ENCODE measurements at regions of chr1 and their contacts with region 1.

Region 1: GRCh38 chr1:15803354-15803753 is 4.1 kb downstream of the UQCRHL start:
- DNase-seq: peak in 1 of 2 donors; percentile 70
- ATAC-seq: no peak
- H3K4me3 ChIP-seq: no peak overlapping the region
- H3K27ac ChIP-seq: no peak overlapping the region
- H3K4me1 ChIP-seq: peaks cover 0 to 5% of the 10 kb centered on the region in 2 donors
- H3K27me3 ChIP-seq: no peaks in the 10 kb centered on the region

Region 2: DNA sequence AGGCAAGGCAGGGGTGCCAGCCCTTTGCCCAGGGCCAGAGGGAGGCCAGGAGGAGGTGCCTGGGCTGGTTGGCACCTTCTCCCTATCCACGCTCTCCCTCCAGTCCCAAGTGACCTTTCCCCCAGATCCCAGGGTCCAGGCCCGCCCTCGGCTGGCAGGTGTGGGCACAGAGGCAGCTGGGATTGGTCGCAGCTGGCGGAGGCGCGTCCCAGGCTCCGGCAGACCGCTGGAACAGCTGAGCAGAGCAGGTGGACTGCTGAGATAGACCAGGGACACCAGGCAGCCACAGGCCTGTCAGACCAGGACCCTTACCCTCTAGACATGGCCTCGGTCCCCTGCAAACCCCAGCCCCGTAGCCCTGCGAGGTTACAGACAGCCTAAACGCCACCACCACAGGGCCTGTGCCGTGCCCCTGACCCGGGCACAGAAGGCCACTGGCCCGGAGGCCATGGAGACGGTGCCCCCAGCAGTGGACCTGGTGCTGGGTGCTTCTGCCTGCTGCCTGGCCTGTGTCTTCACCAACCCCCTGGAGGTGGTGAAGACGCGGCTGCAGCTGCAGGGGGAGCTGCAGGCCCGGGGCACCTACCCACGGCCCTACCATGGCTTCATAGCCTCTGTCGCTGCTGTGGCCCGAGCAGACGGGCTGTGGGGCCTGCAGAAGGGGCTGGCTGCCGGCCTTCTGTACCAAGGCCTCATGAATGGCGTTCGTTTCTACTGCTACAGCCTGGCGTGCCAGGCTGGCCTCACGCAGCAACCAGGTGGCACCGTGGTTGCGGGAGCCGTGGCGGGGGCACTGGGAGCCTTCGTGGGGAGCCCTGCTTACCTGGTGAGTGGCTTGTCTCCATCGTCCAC is 67.1 kb before region 1 on chr1 and contains the start of gene SLC25A34:
- intact Hi-C with region 1: no loop called
- DNase-seq: peak in 1 of 2 donors; percentile 61
- ATAC-seq: peak; percentile 14
- H3K4me3 ChIP-seq: no peak within 1 kb of the TSS
- H3K27ac ChIP-seq: peak within 1 kb of the TSS in 1 of 2 donors; percentile 3
- H3K4me1 ChIP-seq: no peaks in the 10 kb centered on the region
- H3K27me3 ChIP-seq: no peaks in the 10 kb centered on the region
- total RNA-seq, gene SLC25A34: 2.5 to 4.3 TPM

Region 3: DNA sequence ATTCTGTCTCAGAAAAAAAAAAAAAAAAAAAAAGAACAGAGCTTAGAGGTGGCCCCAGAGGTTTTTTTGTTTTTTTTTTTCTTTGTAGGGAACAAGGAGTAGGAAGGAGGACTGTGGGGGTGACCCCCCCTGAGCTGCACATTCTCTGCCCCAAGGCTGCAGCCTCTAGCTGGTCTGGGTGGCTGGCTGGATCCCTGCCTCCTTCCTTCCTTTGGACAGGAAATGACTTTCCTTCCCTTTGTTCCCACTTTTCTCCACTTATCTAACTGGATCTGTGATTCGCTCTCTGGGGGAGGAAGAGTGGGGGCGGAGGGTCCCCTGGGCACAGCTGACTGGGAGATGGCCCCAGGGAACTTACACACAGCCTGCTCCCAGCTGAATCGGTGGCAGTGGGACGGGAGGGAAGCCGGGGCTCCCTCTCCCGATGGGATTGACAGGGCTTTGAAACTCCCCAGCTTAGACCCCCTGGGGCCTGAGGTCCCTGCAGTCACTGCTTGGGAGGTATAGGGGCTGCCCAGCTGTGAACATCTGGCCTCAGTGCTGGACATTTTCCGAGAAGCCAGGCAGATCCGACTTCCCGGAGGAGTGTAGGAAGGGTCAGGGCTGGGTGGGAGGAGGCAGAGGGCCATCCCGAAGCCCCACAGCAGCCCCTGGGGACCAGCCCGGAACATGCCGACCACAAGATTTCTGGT is 42.7 kb before region 1 on chr1:
- intact Hi-C with region 1: no loop called
- DNase-seq: peak in 1 of 2 donors; percentile 79
- ATAC-seq: peak; percentile 23
- H3K4me3 ChIP-seq: peak overlapping the region; percentile 46 to 99
- H3K27ac ChIP-seq: peak overlapping the region; percentile 77 to 79
- H3K4me1 ChIP-seq: no peaks in the 10 kb centered on the region
- H3K27me3 ChIP-seq: no peaks in the 10 kb centered on the region

Region 4: GRCh38 chr1:15825800-15826199 is 22.4 kb after region 1 on chr1:
- intact Hi-C with region 1: no loop called
- DNase-seq: peak in 1 of 2 donors; percentile 29
- ATAC-seq: no peak
- H3K4me3 ChIP-seq: no peak overlapping the region
- H3K27ac ChIP-seq: no peak overlapping the region
- H3K4me1 ChIP-seq: peaks cover 0 to 3% of the 10 kb centered on the region in 2 donors
- H3K27me3 ChIP-seq: no peaks in the 10 kb centered on the region

Region 5: GRCh38 chr1:15835741-15836510 is 32.6 kb after region 1 on chr1:
- intact Hi-C with region 1: loop called in 1 of 2 experiments (anchors 2 kb)
- DNase-seq: peak; percentile 100
- ATAC-seq: peak; percentile 95
- H3K4me3 ChIP-seq: peak overlapping the region; percentile 76 to 85
- H3K27ac ChIP-seq: peak overlapping the region; percentile 93 to 98
- H3K4me1 ChIP-seq: no peaks in the 10 kb centered on the region
- H3K27me3 ChIP-seq: no peaks in the 10 kb centered on the region

Region 6: GRCh38 chr1:15876357-15877055 is 73.2 kb after region 1 on chr1:
- intact Hi-C with region 1: no loop called
- DNase-seq: no peak
- ATAC-seq: no peak
- H3K4me3 ChIP-seq: no peak overlapping the region
- H3K27ac ChIP-seq: no peak overlapping the region
- H3K4me1 ChIP-seq: peaks cover 3 to 8% of the 10 kb centered on the region in 2 donors
- H3K27me3 ChIP-seq: no peaks in the 10 kb centered on the region

Region 7: DNA sequence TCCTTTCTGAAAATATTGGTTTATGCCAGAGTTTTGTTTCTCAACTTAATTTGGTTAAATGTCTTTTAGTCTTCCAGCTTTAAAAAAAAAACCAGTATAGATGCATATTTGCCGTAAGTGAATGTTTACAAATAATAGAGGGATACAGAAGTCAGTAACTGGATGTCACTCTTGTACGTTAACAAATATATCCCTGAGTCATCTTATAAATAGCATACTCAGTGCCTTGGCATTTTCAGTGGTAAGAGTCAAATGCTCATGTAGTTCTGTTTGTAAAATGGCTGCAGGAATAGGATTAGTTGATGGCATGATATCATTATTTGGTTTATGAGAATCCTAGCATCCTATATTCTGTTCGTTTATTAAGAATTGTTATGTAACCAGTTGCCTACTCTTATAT is 99.5 kb after region 1 on chr1:
- intact Hi-C with region 1: loop called in 1 of 2 experiments (anchors 10 kb)
- DNase-seq: no peak
- ATAC-seq: no peak
- H3K4me3 ChIP-seq: no peak overlapping the region
- H3K27ac ChIP-seq: no peak overlapping the region
- H3K4me1 ChIP-seq: peaks cover 0 to 1% of the 10 kb centered on the region in 2 donors
- H3K27me3 ChIP-seq: no peaks in the 10 kb centered on the region

Region 8: GRCh38 chr1:15949453-15950245 is 146.3 kb after region 1 on chr1:
- intact Hi-C with region 1: loop called (anchors 5 kb)
- DNase-seq: peak; percentile 96 to 97
- ATAC-seq: peak; percentile 88
- H3K4me3 ChIP-seq: no peak overlapping the region
- H3K27ac ChIP-seq: peak overlapping the region; percentile 96 to 99
- H3K4me1 ChIP-seq: peaks cover 0 to 6% of the 10 kb centered on the region in 2 donors
- H3K27me3 ChIP-seq: no peaks in the 10 kb centered on the region

Region 9: DNA sequence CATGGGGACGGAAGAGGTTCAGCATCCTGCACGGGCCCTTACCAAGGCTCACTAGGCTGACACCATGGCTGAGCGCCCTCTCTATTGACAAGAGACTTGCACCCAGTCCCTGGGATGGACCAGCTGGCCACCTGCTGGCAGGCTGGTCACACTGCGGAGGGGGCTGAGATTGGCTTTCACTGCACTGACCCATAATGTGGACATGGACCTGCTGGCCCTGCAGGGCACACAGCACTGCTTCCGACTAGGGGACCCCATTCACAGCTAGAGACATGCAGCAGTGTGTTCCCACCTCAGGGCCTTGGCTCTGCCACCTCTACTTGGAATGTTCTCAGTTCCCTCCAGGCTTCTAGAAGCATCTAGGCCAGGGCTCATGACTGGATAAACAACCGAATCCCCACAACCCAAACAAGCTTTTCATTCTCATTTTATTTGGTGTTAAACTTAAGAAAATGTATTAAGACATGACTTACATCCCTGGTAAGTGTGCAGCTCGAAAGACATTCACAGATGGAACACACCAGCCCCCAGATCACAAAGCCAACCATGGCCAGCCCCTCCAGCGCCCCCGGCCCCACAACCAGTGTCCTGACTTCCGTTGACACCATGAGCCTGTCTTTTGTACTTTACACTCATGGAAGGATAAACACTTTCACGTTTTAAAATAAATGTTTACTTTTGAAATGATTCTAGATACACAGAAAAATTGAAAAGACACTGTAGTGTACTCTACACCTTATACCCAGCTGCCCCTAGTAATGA is 191.4 kb after region 1 on chr1:
- intact Hi-C with region 1: loop called in 1 of 2 experiments (anchors 5 kb)
- DNase-seq: peak; percentile 80 to 89
- ATAC-seq: peak; percentile 80
- H3K4me3 ChIP-seq: no peak overlapping the region
- H3K27ac ChIP-seq: no peak overlapping the region
- H3K4me1 ChIP-seq: no peaks in the 10 kb centered on the region
- H3K27me3 ChIP-seq: no peaks in the 10 kb centered on the region

Measured in aorta (tissue), 5 donors.